SK-N-SH (cell line): ENCODE measurements at regions of chr17 and their contacts with region 1.

Region 1: GRCh38 chr17:45782889-45783592 is 1.1 kb upstream of the CRHR1 start:
- DNase-seq: peak; percentile 94
- H3K4me3 ChIP-seq: peak overlapping the region; percentile 43 to 65
- H3K27ac ChIP-seq: no peak overlapping the region
- H3K4me1 ChIP-seq: peaks cover 4 to 24% of the 10 kb centered on the region in 2 experiments; a peak in 1 of 4 replicates
- H3K27me3 ChIP-seq: peaks cover 43% of the 10 kb centered on the region
- CTCF ChIP-seq: peak; percentile 71
- EP300 ChIP-seq: no peak
- RAD21 ChIP-seq: peak; percentile 37

Region 2: DNA sequence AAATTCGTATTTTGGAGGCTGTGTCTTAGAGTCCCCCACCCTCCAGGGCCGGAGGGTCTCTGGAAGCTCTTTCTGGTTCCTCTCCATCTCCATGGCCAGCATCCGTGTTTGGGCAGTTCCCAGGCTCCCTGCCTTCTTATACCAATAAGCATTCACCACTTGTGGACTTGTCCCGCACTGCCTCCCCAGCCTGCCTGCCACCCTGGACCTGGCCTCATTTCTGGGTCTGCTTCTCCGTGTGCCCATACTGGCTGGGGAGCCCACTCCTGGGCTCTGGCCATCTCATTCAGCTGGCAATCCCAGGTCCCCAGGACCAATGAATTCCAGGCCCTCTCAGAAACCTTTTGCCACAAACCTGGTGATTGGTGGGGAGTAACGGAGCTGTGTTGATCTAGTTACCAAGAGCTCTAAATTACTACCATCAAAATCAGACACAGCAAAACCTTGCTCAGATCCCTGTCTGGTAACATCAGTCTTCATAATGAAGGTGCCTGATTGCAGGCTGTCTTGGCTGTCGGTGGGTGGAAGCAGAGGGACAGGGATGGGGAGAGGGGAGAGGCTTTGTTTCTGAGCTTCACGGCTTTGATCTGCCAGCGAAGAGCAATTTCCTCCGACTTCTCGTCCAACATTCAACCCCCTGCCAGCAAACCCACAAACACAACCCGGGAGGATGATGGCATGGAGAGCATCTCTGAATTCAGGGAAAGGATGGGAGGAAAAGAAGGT is 26.6 kb before region 1 on chr17:
- CTCF ChIA-PET with region 1: interaction called, 15 read pairs
- POLR2A ChIA-PET with region 1: no interaction called
- DNase-seq: no peak
- H3K4me3 ChIP-seq: no peak overlapping the region
- H3K27ac ChIP-seq: no peak overlapping the region
- H3K4me1 ChIP-seq: peaks cover 0 to 11% of the 10 kb centered on the region in 2 experiments; a peak in 1 of 4 replicates
- H3K27me3 ChIP-seq: no peaks in the 10 kb centered on the region; the same call in 1 of the 2 replicates
- CTCF ChIP-seq: no peak
- EP300 ChIP-seq: no peak
- RAD21 ChIP-seq: no peak

Region 3: DNA sequence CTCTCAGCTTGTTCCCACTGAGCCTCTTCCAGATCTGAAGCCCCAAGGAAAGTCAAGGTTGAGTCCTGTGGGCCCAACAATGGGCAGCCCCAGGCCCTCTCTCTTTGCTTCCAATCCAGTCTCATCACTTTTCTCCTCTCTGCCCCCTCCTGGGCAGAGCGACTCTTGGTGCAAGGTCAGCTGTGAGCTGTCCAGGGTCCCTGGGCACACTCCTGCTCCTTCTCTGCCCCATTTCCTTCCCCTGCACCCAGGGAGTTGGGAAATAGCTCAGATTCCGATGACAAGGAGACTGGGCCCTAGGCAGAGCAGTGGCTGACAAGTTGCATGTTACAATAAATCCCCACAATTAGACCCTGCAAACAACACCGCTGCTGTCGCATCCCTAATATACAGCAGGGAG is 15.0 kb before region 1 on chr17:
- CTCF ChIA-PET with region 1: interaction called, 61 read pairs
- POLR2A ChIA-PET with region 1: no interaction called
- DNase-seq: no peak
- H3K4me3 ChIP-seq: no peak overlapping the region
- H3K27ac ChIP-seq: no peak overlapping the region
- H3K4me1 ChIP-seq: peaks cover 0 to 3% of the 10 kb centered on the region in 2 experiments; a peak in 1 of 4 replicates
- H3K27me3 ChIP-seq: no peaks in the 10 kb centered on the region
- CTCF ChIP-seq: peak; percentile 13; the same call in 1 of the 2 replicates
- EP300 ChIP-seq: no peak
- RAD21 ChIP-seq: no peak

Region 4: DNA sequence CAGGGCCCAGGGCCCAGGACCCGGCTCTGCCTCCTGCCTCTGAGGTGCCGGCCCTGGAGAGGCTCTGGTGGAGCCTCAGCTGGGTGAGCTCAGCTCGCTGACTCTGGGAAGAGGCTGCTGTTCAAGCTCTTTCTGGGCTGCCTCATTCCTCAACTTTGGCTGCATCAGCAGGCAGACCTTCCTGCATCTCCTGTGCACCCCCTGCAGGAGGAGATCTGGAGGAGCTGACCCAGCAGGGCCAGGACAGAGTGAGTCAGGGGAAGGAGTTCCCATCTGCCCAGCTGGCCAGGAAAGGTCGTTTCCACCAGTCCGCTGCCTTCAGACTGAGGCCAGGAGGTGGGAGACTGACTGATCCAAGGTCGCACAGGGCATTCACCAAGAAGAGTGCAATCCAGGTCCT is 11.8 kb after region 1 on chr17:
- CTCF ChIA-PET with region 1: interaction called, 18 read pairs
- POLR2A ChIA-PET with region 1: interaction called, 3 read pairs
- DNase-seq: no peak
- H3K4me3 ChIP-seq: no peak overlapping the region
- H3K27ac ChIP-seq: no peak overlapping the region
- H3K4me1 ChIP-seq: no peaks in the 10 kb centered on the region; a peak in 1 of 4 replicates
- H3K27me3 ChIP-seq: peaks cover 32% of the 10 kb centered on the region; the same call in 1 of the 2 replicates
- CTCF ChIP-seq: peak; percentile 14; the same call in 1 of the 2 replicates
- EP300 ChIP-seq: no peak
- RAD21 ChIP-seq: peak; percentile 34

Region 5: DNA sequence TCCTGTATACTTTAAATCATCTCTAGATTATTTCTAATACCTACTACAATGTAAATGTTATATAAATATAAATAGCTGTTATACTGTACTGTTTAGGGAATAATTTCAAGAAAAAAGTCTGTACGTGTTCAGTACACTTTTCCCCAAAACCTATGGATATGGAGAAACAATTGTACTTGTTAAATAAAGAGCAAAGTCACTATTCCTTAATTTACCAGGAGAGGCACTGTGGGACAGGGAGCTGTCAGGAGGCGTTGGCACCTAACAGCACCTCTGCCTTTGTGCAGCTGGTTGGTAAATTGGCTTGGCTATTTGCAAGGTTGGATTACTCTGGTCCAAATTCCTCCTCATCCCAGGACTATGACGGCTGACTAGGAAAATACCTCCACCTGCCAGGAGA is 29.1 kb after region 1 on chr17:
- CTCF ChIA-PET with region 1: interaction called, 49 read pairs
- POLR2A ChIA-PET with region 1: no interaction called
- DNase-seq: no peak
- H3K4me3 ChIP-seq: no peak overlapping the region
- H3K27ac ChIP-seq: no peak overlapping the region
- H3K4me1 ChIP-seq: peaks cover 0 to 34% of the 10 kb centered on the region in 2 experiments; a peak in 1 of 4 replicates
- H3K27me3 ChIP-seq: 0 out of 2 replicates have a peak, but pooled peaks cover 2% of the 10 kb centered on the region
- CTCF ChIP-seq: no peak
- EP300 ChIP-seq: no peak
- RAD21 ChIP-seq: no peak

Region 6: DNA sequence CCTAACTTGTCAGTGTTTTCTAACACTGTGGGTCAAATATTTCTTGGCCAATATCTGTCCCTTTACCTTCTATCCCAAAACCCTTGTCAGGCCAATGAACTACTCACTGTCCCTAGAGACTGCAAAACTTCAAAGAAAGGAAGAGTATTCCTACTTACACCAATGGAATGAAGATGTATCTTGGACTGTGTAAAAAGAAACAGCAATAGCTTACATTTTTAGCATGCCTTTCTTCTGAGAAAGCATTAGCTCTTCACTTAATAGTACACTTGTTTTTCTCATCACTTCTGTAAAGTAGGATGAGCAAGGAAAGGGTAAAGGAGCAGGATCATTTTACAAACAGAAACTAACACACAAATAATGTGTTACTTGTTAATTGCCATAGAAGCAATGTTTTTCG is 290.0 kb after region 1 on chr17:
- CTCF ChIA-PET with region 1: no interaction called
- POLR2A ChIA-PET with region 1: no interaction called
- DNase-seq: no peak
- H3K4me3 ChIP-seq: no peak overlapping the region
- H3K27ac ChIP-seq: peak overlapping the region; percentile 30 to 71; a peak in 3 of 4 replicates
- H3K4me1 ChIP-seq: peaks cover 0 to 18% of the 10 kb centered on the region in 2 experiments; a peak in 3 of 4 replicates
- H3K27me3 ChIP-seq: no peaks in the 10 kb centered on the region
- CTCF ChIP-seq: no peak
- EP300 ChIP-seq: no peak
- RAD21 ChIP-seq: no peak